Thyroid gland (tissue), 4 donors: ENCODE measurements at regions of chr1 and their contacts with region 1.

Region 1: DNA sequence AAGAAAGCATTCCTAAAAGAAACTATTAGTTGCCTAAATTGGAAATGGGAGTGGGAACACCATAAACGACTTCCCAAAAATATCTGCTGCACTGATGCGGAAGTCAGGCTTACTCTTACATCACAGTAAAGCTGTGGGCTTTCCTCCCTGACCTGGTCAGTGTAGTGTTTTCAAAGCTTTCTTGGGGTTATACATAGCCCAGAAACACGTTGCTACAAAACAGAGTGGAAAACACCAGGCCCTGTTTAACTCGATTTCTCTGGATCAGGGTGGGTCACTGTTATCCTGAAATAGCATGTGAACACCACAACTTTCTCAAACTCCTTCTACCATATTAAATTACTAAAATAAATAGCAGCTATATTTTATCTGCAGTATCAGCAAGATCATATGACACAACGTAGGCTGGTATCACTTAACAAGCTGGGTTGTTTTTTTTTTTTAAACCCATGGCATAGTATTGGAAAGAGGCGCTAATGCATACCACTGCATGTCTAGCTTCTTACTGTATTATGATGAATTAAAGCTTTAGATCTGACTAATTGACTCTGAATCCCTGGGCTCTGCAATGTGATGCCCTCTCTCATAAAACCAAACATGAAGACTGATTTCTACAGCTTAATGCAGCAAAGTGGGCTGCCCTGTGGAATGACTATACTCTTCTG is 184.6 kb downstream of the TGFB2 start:
- DNase-seq: no peak
- H3K4me3 ChIP-seq: no peak overlapping the region
- H3K27ac ChIP-seq: no peak overlapping the region
- H3K4me1 ChIP-seq: peaks cover 4 to 8% of the 10 kb centered on the region in 2 donors
- H3K27me3 ChIP-seq: no peaks in the 10 kb centered on the region
- CTCF ChIP-seq: no peak
- POLR2A ChIP-seq: no peak

Region 2: DNA sequence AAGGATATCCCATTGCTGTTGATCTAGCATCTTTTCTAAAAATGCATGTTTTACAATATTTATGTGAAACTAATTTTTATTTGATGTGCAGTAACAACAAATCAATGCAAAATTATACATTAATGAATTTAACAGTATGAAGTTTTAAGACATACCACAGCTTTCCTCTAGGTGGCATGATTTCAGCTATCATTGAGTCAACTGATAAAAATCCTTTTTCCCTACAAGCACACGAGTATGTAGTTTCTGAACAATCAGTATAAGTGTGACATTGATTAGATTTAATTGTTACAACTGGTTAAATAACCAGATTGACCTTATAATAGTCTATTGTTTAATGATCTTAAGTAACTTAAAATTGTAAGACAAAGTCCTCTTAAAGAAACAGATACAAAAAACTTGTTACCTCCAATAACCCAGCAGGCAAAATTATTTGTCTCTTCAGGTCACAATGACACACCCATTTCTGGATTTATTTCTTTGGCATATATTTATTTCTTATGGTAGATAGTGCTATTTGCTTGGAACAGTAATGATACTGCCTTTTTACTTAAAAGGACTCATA is 190.4 kb before region 1 on chr1:
- intact Hi-C with region 1: loop called (anchors 5 kb)
- DNase-seq: no peak
- H3K4me3 ChIP-seq: no peak overlapping the region
- H3K27ac ChIP-seq: no peak overlapping the region
- H3K4me1 ChIP-seq: peaks cover 0 to 7% of the 10 kb centered on the region in 2 donors
- H3K27me3 ChIP-seq: no peaks in the 10 kb centered on the region
- CTCF ChIP-seq: peak in 5 of 6 experiments; percentile 13 to 88 (median 70)
- POLR2A ChIP-seq: no peak